Activated CD4-positive, alpha-beta memory T cell treated with anti-CD3 and anti-CD28 coated beads, Interleukin-2, amount 10 ng/mL, durations not matched to agents 7 days and 5 days (primary cell): ENCODE measurements at regions of chr2 and their contacts with region 1.

Region 1: GRCh38 chr2:42810121-42810970 is 18.0 kb upstream of the HAAO start:
- DNase-seq: peak; percentile 96
- H3K4me3 Mint-ChIP-seq: peak overlapping the region; percentile 93
- H3K27ac Mint-ChIP-seq: peak overlapping the region; percentile 100
- H3K4me1 Mint-ChIP-seq: peaks cover 18% of the 10 kb centered on the region
- H3K27me3 Mint-ChIP-seq: peaks cover 7% of the 10 kb centered on the region

Region 2: GRCh38 chr2:42792583-42793333 is 17.6 kb before region 1 on chr2 and contains the start of gene HAAO:
- CTCF ChIA-PET with region 1: interaction called, 6 read pairs
- POLR2A ChIA-PET with region 1: interaction called, 31 read pairs
- DNase-seq: peak; percentile 16
- H3K4me3 Mint-ChIP-seq: peak within 1 kb of the TSS; percentile 40
- H3K27ac Mint-ChIP-seq: no peak within 1 kb of the TSS
- H3K4me1 Mint-ChIP-seq: peaks cover 18% of the 10 kb centered on the region
- H3K27me3 Mint-ChIP-seq: peaks cover 50% of the 10 kb centered on the region
- total RNA-seq, gene HAAO: 0.18 to 0.28 TPM

Region 3: GRCh38 chr2:42828487-42829425 is 18.4 kb after region 1 on chr2:
- CTCF ChIA-PET with region 1: interaction called, 34 read pairs
- POLR2A ChIA-PET with region 1: interaction called, 5 read pairs
- DNase-seq: peak; percentile 70
- H3K4me3 Mint-ChIP-seq: no peak overlapping the region
- H3K27ac Mint-ChIP-seq: no peak overlapping the region
- H3K4me1 Mint-ChIP-seq: peaks cover 8% of the 10 kb centered on the region
- H3K27me3 Mint-ChIP-seq: peaks cover 12% of the 10 kb centered on the region